ENCODE measurements at regions of chr6 and their contacts with region 1.

Region 1: DNA sequence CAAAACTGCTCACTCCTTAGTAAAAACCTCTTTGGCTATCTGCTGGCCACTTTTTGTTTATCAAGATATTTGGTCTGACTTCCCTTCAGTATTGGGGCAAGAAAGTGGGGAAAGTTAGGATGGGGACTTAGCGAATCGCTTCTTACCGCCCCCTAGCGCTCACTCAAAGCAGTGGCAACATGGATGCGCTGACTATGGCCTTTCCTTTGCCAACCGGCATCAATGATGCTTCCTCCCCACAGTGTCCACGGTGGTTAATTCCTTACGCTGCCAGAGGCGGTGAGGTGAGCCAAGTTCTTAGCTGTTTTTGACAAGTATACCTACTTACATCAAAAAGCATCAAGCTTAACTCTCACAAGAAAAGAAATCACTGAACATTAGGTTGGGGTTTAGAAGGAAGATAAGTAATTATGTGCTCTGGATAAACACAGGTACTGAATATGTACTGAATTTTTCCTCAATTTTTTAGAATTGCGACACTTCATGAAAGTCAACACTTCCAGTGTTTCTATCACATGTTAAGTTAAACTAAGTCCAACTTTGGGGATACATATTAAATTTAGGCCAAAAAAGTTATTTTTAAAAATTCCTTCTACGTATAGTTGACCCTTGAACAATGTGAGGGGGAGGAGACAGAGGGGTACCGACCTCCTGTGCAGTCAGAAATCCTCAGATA is 86.7 kb downstream of the GMDS start:
- DNase-seq: peak; percentile 81
- ATAC-seq: peak; percentile 100
- H3K4me3 Mint-ChIP-seq: no peak overlapping the region
- H3K27ac Mint-ChIP-seq: no peak overlapping the region
- H3K4me1 Mint-ChIP-seq: peaks cover 19% of the 10 kb centered on the region
- H3K27me3 Mint-ChIP-seq: no peaks in the 10 kb centered on the region
- CTCF ChIP-seq: peak; percentile 77

Region 2: GRCh38 chr6:1987640-1988039 is 171.1 kb before region 1 on chr6:
- CTCF ChIA-PET with region 1: no interaction called
- POLR2A ChIA-PET with region 1: no interaction called
- DNase-seq: no peak
- ATAC-seq: no peak
- H3K4me3 Mint-ChIP-seq: no peak overlapping the region
- H3K27ac Mint-ChIP-seq: no peak overlapping the region
- H3K4me1 Mint-ChIP-seq: peaks cover 9% of the 10 kb centered on the region
- H3K27me3 Mint-ChIP-seq: no peaks in the 10 kb centered on the region
- CTCF ChIP-seq: no peak

Region 3: DNA sequence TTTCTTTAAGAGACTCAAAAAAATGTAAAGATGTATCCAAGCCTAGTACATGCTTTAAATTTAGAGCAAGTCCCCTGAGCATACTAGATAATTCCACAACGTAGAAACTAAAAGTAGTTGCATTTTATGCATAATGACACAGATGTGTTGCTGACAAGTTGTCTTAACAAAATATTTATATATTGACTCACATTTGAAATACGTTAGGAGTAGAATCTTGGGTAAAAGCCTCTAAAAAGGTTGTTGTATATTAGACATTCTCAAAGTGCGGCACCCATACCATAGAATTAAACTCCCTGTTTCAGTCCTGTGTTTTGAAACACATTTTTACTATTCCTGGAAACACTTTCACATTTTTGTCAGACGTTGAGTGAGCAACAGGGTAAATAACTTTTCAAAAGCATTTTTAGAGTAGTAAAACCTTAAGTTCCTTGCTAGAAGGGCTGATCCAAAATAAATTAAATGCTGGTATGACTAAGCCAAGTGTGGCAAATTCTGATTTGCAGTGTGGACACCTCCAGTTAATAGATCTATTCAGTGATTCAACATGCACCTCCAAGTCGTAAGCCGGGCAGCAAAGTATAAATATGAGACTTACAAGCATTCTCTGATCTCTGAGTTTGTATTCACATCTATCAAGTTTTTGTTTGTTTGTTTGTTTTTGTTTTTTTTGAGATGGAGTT is 10.8 kb before region 1 on chr6:
- CTCF ChIA-PET with region 1: interaction called, 10 read pairs
- POLR2A ChIA-PET with region 1: no interaction called
- DNase-seq: no peak
- ATAC-seq: no peak
- H3K4me3 Mint-ChIP-seq: no peak overlapping the region
- H3K27ac Mint-ChIP-seq: no peak overlapping the region
- H3K4me1 Mint-ChIP-seq: peaks cover under 1% of the 10 kb centered on the region; the same call in 1 of the 2 replicates
- H3K27me3 Mint-ChIP-seq: no peaks in the 10 kb centered on the region
- CTCF ChIP-seq: no peak

Region 4: GRCh38 chr6:2175825-2176224 is 17.1 kb after region 1 on chr6:
- CTCF ChIA-PET with region 1: interaction called, 10 read pairs
- POLR2A ChIA-PET with region 1: no interaction called
- DNase-seq: no peak
- ATAC-seq: no peak
- H3K4me3 Mint-ChIP-seq: no peak overlapping the region
- H3K27ac Mint-ChIP-seq: no peak overlapping the region
- H3K4me1 Mint-ChIP-seq: peaks cover 13% of the 10 kb centered on the region
- H3K27me3 Mint-ChIP-seq: no peaks in the 10 kb centered on the region; the same call in 1 of the 2 replicates
- CTCF ChIP-seq: no peak

Region 5: DNA sequence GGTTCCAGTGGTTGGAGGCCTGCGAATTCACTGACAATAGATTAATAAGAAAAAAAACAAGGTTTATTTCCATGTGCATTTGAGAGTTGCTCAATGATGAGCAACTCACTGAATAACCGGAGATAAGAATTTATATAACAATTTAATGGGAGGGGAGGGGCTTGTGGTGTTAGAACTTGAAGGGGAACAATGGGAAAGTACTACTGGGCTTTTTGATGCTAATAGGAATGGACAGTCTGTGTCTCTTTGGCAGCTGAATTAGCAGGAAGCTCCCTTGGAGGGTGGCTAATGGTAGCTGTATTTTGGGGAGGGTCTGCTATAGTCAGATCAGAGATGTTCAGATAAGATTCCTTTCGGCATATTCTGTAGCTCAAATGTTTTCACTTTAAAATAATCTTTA is 149.1 kb after region 1 on chr6:
- CTCF ChIA-PET with region 1: no interaction called
- POLR2A ChIA-PET with region 1: no interaction called
- DNase-seq: no peak
- ATAC-seq: no peak; the same call in 1 of the 2 replicates
- H3K4me3 Mint-ChIP-seq: no peak overlapping the region
- H3K27ac Mint-ChIP-seq: no peak overlapping the region; the same call in 1 of the 2 replicates
- H3K4me1 Mint-ChIP-seq: peaks cover 15% of the 10 kb centered on the region
- H3K27me3 Mint-ChIP-seq: peaks cover 6% of the 10 kb centered on the region
- CTCF ChIP-seq: no peak